ENCODE measurements at regions of chr3 and their contacts with region 1.

Region 1: DNA sequence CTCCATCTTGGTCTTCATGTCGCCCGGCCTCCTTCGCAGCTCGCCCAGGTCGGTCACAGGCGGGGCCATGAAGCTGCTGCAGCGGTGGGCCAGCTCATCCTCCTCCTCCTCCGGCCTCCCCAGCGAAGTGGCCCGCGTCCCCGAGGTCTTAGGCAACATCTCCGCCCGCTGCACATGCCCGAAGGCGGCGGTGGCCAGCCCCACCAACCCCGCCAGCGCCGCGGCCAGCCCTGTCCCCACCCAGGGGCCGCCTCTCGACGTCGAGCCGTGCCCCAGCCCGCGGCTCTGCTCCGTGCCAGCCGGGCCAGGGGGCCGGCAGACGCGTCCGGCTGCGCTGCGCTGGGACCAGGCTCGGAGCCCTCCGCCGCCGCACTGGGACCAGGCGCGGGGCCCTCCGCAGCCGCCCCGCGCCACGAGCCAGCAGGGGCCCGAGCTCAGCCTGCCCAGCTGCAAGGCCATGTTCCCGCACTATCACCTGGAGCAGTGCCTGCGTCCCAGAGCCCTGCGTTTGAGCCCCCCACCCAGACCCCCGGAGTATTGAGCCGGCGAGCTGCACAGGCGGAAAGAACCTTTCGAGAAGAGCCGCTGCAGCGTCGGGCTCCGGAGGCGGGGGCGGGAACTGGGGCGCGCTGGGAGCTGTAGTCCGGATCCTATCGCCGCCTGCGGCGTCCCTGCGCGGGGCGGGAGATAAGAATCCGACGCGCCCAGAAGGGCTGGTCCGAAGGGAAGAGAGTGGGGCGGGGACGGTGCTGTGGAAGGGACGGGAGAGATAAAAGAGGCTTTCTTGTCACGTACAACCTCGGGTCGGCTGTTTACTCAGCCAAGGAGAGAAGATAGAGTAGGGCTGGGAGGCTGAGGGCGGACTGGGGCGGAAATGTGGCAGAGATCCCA is at the start of gene CPOX:
- DNase-seq: peak; percentile 54 to 87 (median 80)
- ATAC-seq: peak; percentile 96
- H3K4me3 ChIP-seq: peak within 1 kb of the TSS; percentile 70 to 92
- H3K4me3 Mint-ChIP-seq: peak within 1 kb of the TSS; percentile 99
- H3K27ac ChIP-seq: peak within 1 kb of the TSS; percentile 61 to 74
- H3K27ac Mint-ChIP-seq: peak within 1 kb of the TSS; percentile 95
- H3K4me1 ChIP-seq: peaks cover 15% of the 10 kb centered on the region
- H3K4me1 Mint-ChIP-seq: peaks cover 35% of the 10 kb centered on the region
- H3K27me3 ChIP-seq: no peaks in the 10 kb centered on the region
- H3K27me3 Mint-ChIP-seq: no peaks in the 10 kb centered on the region
- CTCF ChIP-seq: no peak
- total RNA-seq, gene CPOX: 7.5 to 7.7 TPM

Region 2: GRCh38 chr3:97821810-97822775 is 771.2 kb before region 1 on chr3 and contains the start of gene CRYBG3:
- CTCF ChIA-PET with region 1: no interaction called
- POLR2A ChIA-PET with region 1: interaction called, 3 read pairs
- intact Hi-C with region 1: loop called in 1 of 2 experiments (anchors 10 kb)
- DNase-seq: peak; percentile 63 to 90 (median 78)
- ATAC-seq: peak; percentile 98
- H3K4me3 ChIP-seq: peak within 1 kb of the TSS; percentile 61 to 75
- H3K4me3 Mint-ChIP-seq: peak within 1 kb of the TSS; percentile 95
- H3K27ac ChIP-seq: peak within 1 kb of the TSS; percentile 11 to 28
- H3K27ac Mint-ChIP-seq: peak within 1 kb of the TSS; percentile 81
- H3K4me1 ChIP-seq: peaks cover 11% of the 10 kb centered on the region
- H3K4me1 Mint-ChIP-seq: peaks cover 21% of the 10 kb centered on the region
- H3K27me3 ChIP-seq: no peaks in the 10 kb centered on the region
- H3K27me3 Mint-ChIP-seq: peaks cover 13% of the 10 kb centered on the region
- CTCF ChIP-seq: no peak
- total RNA-seq, gene CRYBG3: 1.00 to 1.1 TPM

Region 3: DNA sequence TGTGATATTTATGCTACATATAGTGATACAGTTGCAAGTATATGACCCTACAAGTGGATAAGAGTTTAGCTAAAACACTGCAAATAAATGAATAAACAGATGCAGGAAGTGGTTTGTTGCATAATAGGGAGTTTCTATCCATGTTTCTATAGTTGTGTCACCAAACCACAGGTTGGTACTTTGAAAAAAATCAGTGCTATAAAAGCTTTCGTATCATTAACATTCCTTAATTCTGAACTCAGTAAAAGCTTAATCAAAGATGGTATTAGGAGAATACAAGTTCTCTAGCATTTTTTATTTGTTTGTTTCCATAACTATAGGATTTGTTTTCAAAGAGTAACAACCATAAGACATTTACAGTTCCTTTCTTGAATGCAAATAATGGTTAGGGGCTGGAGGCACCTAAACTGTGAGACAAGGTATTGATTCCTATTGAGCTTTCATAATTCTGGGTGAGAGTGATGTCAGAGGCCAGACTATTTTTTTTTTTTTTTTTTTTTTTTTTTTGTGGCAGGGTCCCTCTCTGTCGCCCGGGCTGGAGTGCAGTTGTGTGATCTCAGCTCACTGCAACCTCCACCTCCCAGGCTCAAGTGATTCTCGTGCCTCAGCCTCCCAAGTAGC is 29.5 kb before region 1 on chr3:
- CTCF ChIA-PET with region 1: no interaction called
- POLR2A ChIA-PET with region 1: interaction called, 17 read pairs
- intact Hi-C with region 1: loop called in 1 of 2 experiments (anchors 2 kb)
- DNase-seq: peak in 3 of 9 experiments; percentile 42 to 88 (median 77)
- ATAC-seq: peak; percentile 51
- H3K4me3 ChIP-seq: no peak overlapping the region
- H3K4me3 Mint-ChIP-seq: peak overlapping the region; percentile 68
- H3K27ac ChIP-seq: peak overlapping the region; percentile 46 to 86
- H3K27ac Mint-ChIP-seq: peak overlapping the region; percentile 94
- H3K4me1 ChIP-seq: peaks cover 63% of the 10 kb centered on the region
- H3K4me1 Mint-ChIP-seq: peaks cover 73% of the 10 kb centered on the region
- H3K27me3 ChIP-seq: no peaks in the 10 kb centered on the region
- H3K27me3 Mint-ChIP-seq: no peaks in the 10 kb centered on the region
- CTCF ChIP-seq: no peak

Region 4: DNA sequence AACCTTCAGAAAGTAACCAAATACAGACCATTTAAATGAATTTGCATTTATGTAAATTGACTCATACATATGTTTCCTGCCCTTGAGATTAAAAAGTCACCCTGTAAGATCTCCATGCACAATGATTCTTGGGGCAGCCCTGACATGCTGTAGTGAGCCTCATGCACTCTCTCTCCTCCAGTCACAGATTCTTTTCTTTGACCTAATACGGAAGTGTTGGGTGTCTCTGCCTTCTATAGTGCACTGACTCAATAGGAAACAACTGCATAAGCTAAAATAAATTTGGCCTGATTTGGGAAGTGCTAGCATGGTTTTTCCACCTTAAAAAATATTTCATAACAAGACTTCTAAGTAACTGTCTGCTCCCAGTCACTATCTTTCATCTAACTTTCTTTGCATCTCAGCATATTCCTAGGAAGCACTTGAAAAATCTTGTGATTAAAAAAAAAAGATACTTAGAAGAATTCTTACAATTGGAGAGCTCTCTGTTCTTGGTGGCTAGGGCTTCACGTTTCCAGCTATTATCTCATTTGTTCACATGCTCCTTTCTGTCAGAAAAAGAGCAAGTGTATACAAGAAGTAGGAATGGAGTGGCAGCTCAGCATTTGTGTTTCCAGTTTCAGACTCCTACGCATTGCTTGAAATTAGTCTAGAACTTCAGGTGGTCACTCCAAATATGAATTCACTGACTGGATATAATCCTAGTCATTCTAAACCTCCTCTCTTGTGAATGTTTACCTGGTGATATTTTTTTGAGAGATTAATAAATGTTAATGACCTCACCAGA is 837.2 kb after region 1 on chr3:
- CTCF ChIA-PET with region 1: no interaction called
- POLR2A ChIA-PET with region 1: no interaction called
- intact Hi-C with region 1: no loop called
- DNase-seq: no peak
- ATAC-seq: no peak
- H3K4me3 ChIP-seq: no peak overlapping the region
- H3K4me3 Mint-ChIP-seq: no peak overlapping the region
- H3K27ac ChIP-seq: no peak overlapping the region
- H3K27ac Mint-ChIP-seq: no peak overlapping the region
- H3K4me1 ChIP-seq: no peaks in the 10 kb centered on the region
- H3K4me1 Mint-ChIP-seq: no peaks in the 10 kb centered on the region
- H3K27me3 ChIP-seq: no peaks in the 10 kb centered on the region
- H3K27me3 Mint-ChIP-seq: no peaks in the 10 kb centered on the region
- CTCF ChIP-seq: no peak

Region 5: DNA sequence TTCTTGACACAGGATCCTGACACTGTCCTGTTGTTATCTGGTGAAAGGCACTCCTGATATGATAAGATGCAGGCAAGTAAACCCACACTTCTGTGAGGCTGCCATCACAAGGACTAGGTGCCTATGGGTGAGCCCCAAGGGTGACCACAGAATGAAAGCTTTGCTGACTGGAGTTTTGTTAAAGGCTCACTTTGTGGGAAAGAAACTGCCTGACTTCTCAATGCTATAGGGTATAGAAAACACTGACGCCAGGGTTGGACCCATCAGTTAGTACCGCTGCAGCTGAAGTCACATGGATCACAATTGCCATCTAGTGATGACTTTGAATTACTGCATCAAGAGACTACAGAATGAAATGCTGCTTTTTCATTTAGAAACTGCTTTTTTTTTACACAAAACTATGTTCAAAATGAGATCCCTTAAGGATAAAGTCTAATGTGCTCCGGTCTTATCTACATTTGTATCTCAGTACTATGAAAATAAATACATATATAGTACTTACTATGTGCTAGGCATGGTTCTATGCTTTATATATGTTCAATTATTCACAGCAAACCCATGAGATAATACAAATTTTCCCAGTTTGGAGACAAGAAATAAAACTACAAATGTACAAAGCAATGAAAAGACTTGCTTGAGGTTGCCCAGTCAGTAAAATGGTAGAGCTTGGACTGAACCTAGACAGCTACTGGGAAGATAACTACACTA is 1160.1 kb after region 1 on chr3:
- CTCF ChIA-PET with region 1: interaction called, 4 read pairs
- POLR2A ChIA-PET with region 1: no interaction called
- intact Hi-C with region 1: loop called in 1 of 2 experiments (anchors 5 kb)
- DNase-seq: peak in 2 of 9 experiments; percentile 29 to 49
- ATAC-seq: peak; percentile 48
- H3K4me3 ChIP-seq: no peak overlapping the region
- H3K4me3 Mint-ChIP-seq: no peak overlapping the region
- H3K27ac ChIP-seq: no peak overlapping the region
- H3K27ac Mint-ChIP-seq: no peak overlapping the region
- H3K4me1 ChIP-seq: no peaks in the 10 kb centered on the region
- H3K4me1 Mint-ChIP-seq: peaks cover 2% of the 10 kb centered on the region
- H3K27me3 ChIP-seq: no peaks in the 10 kb centered on the region
- H3K27me3 Mint-ChIP-seq: peaks cover 23% of the 10 kb centered on the region
- CTCF ChIP-seq: peak; percentile 40

Region 6: DNA sequence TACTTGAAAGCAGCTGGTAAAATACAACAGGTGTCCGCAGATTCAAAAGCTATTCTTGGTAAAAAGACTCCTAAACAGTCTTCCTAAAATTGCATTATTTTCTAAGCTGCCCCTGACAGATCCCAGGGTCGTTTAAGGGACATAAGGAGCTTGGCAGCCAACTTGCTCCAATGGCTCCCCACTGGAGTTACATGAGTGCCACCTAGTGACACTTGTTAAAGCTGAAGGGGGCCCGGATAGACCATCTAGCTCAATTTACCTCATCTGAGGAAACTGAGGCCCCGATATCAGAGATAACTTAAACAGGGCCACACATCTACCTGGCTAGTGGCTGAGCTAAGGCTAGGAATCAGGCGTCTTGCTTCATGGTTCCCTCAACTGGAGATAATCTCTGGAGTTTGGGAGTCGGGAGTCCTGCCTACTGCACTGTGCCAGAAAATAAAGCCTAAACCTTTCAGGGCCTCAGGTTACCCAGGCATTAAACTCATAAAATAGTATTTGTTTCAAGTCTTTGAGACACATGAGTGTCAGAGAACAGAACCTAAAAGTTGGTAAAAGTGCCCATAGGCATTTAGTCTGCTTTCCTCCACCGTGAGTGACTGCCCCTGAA is 1661.0 kb after region 1 on chr3:
- CTCF ChIA-PET with region 1: no interaction called
- POLR2A ChIA-PET with region 1: no interaction called
- intact Hi-C with region 1: loop called in 1 of 2 experiments (anchors 10 kb)
- DNase-seq: peak in 4 of 9 experiments; percentile 15 to 64 (median 36)
- ATAC-seq: peak; percentile 66
- H3K4me3 ChIP-seq: no peak overlapping the region
- H3K4me3 Mint-ChIP-seq: no peak overlapping the region
- H3K27ac ChIP-seq: no peak overlapping the region
- H3K27ac Mint-ChIP-seq: no peak overlapping the region
- H3K4me1 ChIP-seq: no peaks in the 10 kb centered on the region
- H3K4me1 Mint-ChIP-seq: peaks cover 5% of the 10 kb centered on the region
- H3K27me3 ChIP-seq: no peaks in the 10 kb centered on the region
- H3K27me3 Mint-ChIP-seq: no peaks in the 10 kb centered on the region
- CTCF ChIP-seq: peak; percentile 51

Measured in CD8-positive, alpha-beta T cell (primary cell).